AG04449 (cell line): ENCODE measurements at regions of chr17 and their contacts with region 1.

Region 1: DNA sequence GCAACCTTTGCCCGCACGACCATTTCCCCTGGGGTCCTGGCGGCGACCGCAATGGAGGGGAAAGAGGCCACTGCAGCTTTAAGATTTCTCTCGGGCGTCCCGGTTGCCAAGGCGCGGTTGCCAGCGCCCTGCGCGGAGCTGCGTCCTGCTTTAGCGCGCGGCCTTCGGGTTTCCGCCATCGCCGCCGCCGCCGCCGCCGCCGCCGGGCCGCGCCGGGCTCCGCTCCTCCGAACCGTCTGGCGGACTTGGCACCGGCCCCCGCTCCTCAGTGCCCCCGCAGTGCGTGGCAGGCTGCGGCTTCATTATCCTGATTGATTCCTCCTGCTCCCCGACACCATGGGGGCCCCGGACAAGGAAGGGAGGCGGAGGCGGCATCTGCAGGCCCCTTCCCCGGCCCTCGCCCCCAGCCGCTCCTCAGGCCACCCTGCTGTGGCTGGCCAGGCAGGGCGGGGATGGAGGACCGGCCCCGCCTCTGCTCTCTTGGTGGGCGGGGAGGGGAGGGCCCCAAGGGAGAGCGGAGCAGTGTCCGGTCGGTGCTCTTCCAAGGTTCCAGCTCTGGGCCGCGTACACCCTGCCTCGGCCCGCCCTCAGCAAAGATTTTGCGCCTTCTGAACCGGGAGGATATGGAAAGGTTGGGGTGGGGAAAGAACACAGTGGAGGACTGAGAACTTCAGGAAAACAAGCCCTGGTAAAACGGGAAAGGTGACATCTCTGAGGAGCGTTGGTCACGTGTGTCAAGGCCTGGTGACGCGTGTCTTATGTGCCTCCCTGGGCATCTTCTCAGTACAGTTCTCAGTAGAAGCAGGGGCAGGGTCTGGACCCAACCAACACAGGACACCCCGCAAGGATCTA is 34.0 kb downstream of the NEUROD2 start:
- DNase-seq: no peak
- H3K4me3 ChIP-seq: peak overlapping the region; percentile 66
- CTCF ChIP-seq: no peak

Region 2: GRCh38 chr17:39209317-39210092 is 364.2 kb before region 1 on chr17:
- CTCF ChIA-PET with region 1: no interaction called
- POLR2A ChIA-PET with region 1: no interaction called
- DNase-seq: no peak
- H3K4me3 ChIP-seq: peak overlapping the region; percentile 51
- CTCF ChIP-seq: no peak

Region 3: GRCh38 chr17:39538866-39539265 is 34.8 kb before region 1 on chr17:
- CTCF ChIA-PET with region 1: no interaction called
- POLR2A ChIA-PET with region 1: no interaction called
- DNase-seq: no peak
- H3K4me3 ChIP-seq: no peak overlapping the region
- CTCF ChIP-seq: no peak

Region 4: DNA sequence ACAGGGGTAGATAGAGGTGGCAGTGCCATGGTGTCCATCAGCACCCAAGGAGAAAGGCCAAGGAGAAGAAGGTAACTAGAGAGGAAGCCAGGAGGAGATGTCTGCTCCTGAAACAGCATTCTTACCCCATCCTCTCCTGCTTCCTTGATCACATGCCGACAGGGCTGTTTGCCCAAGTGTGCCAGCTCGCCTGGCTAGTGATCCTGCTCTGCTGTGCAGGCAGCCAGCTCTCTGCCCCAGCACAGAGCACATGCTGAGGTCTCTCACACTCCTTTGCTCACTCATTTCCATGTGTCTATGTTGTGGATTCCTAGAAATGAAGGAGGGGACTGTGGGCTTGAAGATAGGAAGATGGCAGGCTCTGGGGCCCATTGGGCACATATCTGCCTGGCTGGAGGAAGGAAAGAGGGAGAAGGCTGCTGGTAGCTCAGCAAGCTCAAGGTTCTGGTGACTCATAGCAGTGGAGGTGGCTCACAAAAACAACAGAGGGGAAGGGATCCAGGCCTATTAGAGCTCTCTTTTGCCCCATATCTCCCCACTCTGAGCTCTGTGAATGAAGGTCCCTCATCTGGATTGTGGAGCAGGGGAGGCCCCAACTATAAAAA is 20.2 kb before region 1 on chr17:
- CTCF ChIA-PET with region 1: interaction called, 18 read pairs
- POLR2A ChIA-PET with region 1: no interaction called
- DNase-seq: no peak
- H3K4me3 ChIP-seq: no peak overlapping the region
- CTCF ChIP-seq: no peak

Region 5: DNA sequence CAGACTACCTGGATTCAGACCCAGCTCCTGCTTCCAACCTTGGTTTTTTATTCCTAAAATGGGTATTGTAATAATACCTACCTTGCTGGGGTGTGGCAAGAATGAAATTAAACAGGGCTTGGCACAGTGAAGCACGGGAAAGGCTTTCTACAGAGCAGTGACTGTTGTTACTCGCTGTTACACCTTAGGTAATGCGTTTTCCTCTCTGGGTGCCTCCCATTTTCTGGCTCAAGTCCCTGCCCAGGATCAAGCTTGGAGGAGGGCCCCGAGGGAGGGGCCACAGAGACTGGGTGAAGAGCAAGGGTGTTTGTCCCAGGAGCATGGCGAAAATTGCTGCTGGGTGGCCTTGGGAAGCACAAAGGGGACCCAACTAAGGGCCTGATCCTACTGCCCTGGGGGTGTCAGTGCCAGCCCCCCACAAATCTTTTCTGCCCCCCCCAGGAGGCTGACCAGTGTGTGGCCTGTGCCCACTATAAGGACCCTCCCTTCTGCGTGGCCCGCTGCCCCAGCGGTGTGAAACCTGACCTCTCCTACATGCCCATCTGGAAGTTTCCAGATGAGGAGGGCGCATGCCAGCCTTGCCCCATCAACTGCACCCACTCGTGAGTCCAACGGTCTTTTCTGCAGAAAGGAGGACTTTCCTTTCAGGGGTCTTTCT is 143.3 kb after region 1 on chr17:
- CTCF ChIA-PET with region 1: no interaction called
- POLR2A ChIA-PET with region 1: no interaction called
- DNase-seq: no peak
- H3K4me3 ChIP-seq: no peak overlapping the region
- CTCF ChIP-seq: no peak